Activated T-helper 1 cell treated with anti-CD3 and anti-CD28 coated beads, Interleukin-12 subunit alpha, Interleukin-12 subunit beta, Interleukin-2, Interleukin-4 antibody, amounts not matched to agents 30 ng/mL and 10 ng/mL and 1 ng/mL, durations not matched to agents 14 hours and 24 hours and 36 hours (primary cell): ENCODE measurements at regions of chr14 and their contacts with region 1.

Region 1: DNA sequence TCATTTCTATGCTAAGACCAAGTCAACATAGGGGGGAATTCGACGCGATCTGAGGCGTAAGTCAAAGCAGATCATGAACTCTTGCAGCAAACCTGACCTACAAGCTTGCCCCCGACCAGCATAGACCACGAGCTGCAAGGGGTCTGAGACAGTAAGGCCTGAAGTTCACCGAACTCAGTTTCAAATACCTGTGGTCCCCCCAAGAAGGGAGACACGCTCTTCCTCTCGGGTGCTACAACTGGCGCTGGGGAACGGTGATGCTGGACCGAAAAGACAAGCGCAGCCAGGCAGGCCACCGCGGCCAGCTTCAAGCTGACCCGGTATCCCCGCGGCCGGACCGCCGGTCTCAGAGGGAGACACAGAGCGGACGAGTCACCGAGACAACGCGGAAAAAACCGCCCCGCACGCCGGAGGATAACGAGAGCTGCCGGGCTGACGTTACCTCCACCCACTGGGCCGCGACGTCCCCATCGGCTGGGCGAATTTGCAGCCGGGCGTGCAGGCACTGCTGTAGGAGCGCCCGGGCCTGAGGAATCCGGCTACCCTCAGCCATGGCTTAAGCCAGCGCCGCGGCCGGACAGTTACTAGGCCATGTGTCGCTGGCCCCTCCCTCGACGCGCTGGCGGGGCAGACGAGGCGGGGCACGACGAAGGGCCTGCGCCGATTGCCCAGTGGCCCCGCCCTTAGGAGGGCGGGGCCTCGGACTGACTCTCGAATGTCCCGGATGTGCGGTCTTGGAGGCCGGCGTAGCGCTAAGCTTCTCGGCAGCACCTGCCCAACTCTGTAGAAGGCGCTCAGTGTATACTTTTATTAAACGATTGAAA is at the start of gene DTD2:
- DNase-seq: peak; percentile 89
- H3K4me3 Mint-ChIP-seq: peak within 1 kb of the TSS; percentile 96
- H3K27ac Mint-ChIP-seq: peak within 1 kb of the TSS; percentile 95
- H3K4me1 Mint-ChIP-seq: peaks cover 43% of the 10 kb centered on the region
- H3K27me3 Mint-ChIP-seq: peaks cover 2% of the 10 kb centered on the region
- total RNA-seq, gene DTD2: 29.0 and 30.6 TPM in 2 replicates

Region 2: DNA sequence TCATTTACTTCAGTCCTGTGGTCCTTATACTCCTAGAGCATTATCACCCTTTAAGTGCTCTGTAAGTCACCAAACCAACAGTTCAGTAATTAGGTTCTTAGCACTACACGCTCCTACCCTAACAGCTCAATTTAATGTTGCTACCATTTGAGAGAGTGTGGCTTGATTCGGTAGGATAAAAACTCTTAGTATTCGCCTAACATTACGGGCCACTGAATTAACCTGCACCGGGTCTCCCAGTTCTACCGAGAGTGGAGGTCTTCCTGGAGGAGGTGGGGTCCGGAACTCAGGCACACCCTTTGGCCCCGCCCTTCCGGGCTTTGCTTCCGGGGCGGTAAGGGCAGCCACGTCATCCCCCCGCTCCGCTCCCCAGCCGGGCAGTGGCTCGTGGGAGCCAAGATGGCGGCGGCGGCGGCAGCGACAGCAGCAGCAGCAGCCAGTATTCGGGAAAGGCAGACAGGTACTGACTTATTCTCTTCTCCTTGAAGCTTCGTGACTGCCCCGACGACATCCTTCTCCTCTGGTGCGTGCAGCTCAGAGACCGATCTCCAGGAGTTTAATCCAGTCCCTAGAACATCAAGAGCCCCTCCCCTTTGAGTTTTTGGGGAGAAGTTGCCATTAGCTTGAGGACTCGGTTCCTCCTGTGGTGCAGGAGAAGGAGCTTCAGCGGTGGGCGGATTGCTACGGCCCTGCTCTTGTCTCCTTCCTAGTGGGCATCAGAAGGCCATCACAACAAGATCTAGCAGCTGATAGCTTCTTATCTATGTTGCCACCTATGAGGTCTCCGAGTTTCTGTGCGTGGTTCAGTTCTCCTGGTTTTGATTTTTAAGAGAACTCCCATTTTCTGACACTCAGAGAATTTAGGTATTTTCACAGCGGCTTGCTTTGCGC is 834.9 kb before region 1 on chr14 and contains the start of gene SCFD1:
- intact Hi-C with region 1: loop called (anchors 2 kb)
- DNase-seq: peak; percentile 94
- H3K4me3 Mint-ChIP-seq: peak within 1 kb of the TSS; percentile 99
- H3K27ac Mint-ChIP-seq: peak within 1 kb of the TSS; percentile 98
- H3K4me1 Mint-ChIP-seq: peaks cover 56% of the 10 kb centered on the region
- H3K27me3 Mint-ChIP-seq: no peaks in the 10 kb centered on the region
- total RNA-seq, gene SCFD1: 73.1 and 77.3 TPM in 2 replicates

Region 3: GRCh38 chr14:31388687-31389413 is 68.2 kb before region 1 on chr14:
- intact Hi-C with region 1: loop called (anchors 2 kb)
- DNase-seq: no peak
- H3K4me3 Mint-ChIP-seq: peak overlapping the region; percentile 7
- H3K27ac Mint-ChIP-seq: peak overlapping the region; percentile 93
- H3K4me1 Mint-ChIP-seq: peaks cover 41% of the 10 kb centered on the region
- H3K27me3 Mint-ChIP-seq: no peaks in the 10 kb centered on the region

Region 4: GRCh38 chr14:31561155-31561846 is 104.2 kb after region 1 on chr14 and contains the start of gene NUBPL:
- intact Hi-C with region 1: loop called (anchors 1 kb)
- DNase-seq: peak; percentile 95
- H3K4me3 Mint-ChIP-seq: peak within 1 kb of the TSS; percentile 94
- H3K27ac Mint-ChIP-seq: peak within 1 kb of the TSS; percentile 98
- H3K4me1 Mint-ChIP-seq: peaks cover 23% of the 10 kb centered on the region
- H3K27me3 Mint-ChIP-seq: peaks cover 16% of the 10 kb centered on the region
- total RNA-seq, gene NUBPL: 12.0 and 13.7 TPM in 2 replicates

Region 5: DNA sequence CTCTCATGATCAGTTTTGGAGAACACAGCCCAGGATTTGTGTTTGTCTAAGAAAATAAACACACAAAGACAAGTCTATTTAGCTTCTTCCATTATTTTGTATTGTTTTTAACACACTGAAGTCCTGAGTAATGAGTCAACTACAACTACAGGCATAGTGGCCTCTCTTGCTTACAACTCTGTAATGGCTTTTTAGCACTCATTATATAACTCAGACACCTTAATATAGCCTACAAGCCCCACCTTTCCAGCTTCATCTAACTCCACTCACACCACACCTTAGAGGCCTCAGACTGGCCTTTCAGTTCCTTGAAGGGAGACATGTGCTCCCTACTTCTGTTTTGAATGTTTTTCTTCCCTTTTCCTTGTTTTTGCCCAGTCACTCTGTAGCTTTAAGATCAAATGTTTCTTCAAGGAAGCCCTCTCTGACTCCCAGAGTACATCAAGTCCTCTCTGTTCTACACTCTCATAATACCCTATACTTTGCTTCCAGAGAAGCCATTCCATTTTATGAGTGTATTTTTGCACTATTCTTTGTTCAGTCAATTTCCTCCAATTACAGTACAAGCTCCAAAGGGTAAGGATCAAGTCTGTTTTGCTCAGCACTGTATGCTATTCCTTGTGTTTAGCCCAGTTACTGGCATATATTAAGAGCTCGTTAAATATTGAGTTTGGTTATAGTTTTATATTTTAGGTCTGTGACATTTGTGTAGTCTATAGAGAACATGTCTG is 386.5 kb after region 1 on chr14:
- intact Hi-C with region 1: no loop called
- DNase-seq: no peak
- H3K4me3 Mint-ChIP-seq: no peak overlapping the region
- H3K27ac Mint-ChIP-seq: no peak overlapping the region
- H3K4me1 Mint-ChIP-seq: no peaks in the 10 kb centered on the region
- H3K27me3 Mint-ChIP-seq: no peaks in the 10 kb centered on the region

Region 6: DNA sequence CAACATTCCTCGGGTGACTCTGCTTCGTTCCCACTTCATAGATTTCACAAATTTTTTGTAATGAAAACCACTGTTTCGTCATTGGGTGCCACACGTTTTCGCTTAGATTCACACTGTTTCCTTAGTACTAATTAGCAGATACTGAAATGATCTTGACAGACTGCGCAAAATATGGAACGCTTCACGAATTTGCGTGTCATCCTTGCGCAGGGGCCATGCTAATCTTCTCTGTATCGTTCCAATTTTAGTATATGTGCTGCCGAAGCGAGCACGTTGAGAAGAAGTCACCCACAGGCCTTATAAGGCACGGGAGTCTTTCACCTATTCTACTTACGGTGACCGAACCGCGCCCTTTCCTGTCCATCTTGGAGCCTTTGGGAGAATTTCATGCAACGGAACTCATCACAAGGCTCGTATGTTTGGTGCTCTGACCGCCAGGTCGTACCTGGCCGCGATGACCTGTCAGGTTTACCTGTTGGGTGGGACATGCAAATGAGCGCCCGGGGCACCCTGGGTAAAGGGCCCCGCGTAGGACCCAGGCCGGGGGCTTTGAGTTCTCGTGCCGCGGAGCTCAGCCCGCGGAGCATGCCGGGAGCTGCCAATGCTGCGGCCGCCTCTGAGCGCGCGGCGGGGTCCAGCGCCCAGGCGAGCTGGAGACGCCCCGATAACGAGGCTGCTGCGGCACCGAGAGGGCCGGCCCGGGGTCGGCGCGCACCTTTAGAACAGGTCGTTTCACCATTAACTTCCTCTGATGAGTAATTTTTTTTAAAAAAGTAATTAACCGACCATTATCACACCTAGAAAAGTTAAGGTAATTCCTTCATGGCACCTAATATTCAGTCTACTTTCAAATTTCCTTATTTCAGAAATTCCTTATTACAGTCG is 746.2 kb after region 1 on chr14 and contains the start of gene RNU6-8:
- intact Hi-C with region 1: loop called (anchors 2 kb)
- DNase-seq: peak; percentile 78
- H3K4me3 Mint-ChIP-seq: peak within 1 kb of the TSS; percentile 87
- H3K27ac Mint-ChIP-seq: peak within 1 kb of the TSS; percentile 91
- H3K4me1 Mint-ChIP-seq: peaks cover 49% of the 10 kb centered on the region
- H3K27me3 Mint-ChIP-seq: peaks cover 2% of the 10 kb centered on the region
- total RNA-seq, gene RNU6-8: not detected in 2 replicates